Activated CD4-positive, alpha-beta memory T cell treated with anti-CD3 and anti-CD28 coated beads for 36 hours (primary cell): ENCODE measurements at regions of chr12 and their contacts with region 1.

Region 1: DNA sequence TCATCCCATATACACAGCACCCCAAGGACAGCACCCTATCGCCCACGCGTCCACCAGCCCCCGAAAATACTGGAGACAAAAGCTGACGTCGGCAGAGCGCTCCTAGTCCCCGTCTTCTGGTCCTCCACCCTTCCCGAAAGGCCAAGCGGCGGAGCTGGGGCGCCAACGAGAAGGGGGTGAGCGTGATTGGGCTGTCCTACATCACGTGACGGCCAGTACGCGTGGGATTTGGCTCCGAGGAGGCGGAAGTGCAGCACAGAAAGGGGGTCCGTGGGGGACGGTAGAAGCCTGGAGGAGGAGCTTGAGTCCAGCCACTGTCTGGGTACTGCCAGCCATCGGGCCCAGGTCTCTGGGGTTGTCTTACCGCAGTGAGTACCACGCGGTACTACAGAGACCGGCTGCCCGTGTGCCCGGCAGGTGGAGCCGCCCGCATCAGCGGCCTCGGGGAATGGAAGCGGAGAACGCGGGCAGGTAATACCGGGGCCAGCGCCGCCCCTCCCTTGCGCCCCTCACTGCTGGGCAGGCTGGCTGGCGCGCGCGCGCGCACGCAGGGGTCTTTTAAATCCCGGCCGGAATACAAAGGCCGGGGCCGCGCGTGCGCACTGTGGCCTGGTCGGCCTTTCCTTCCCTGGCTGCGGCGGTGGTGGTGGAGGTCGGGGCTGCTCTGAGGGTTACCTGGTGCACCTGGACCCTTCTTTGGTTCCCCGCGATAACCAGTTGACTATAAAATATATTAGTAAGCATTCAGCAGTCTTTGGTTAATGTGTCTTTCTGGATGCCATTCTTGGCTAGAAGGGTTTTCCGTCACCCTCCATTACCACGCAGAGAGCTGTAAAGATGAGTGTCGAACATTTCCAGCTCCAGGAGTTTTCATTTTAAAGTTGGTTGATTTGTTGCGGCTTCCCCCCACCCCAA is at the start of gene TDG:
- DNase-seq: peak; percentile 99
- H3K4me3 Mint-ChIP-seq: peak within 1 kb of the TSS; percentile 96
- H3K27ac Mint-ChIP-seq: peak within 1 kb of the TSS; percentile 96
- H3K4me1 Mint-ChIP-seq: peaks cover 53% of the 10 kb centered on the region
- H3K27me3 Mint-ChIP-seq: no peaks in the 10 kb centered on the region
- total RNA-seq, gene TDG: 29.1 to 29.7 TPM

Region 2: GRCh38 chr12:103840876-103841689 is 124.8 kb before region 1 on chr12 and contains the start of gene NT5DC3:
- CTCF ChIA-PET with region 1: no interaction called
- POLR2A ChIA-PET with region 1: no interaction called
- intact Hi-C with region 1: loop called (anchors 2 kb)
- DNase-seq: peak; percentile 89
- H3K4me3 Mint-ChIP-seq: peak within 1 kb of the TSS; percentile 76
- H3K27ac Mint-ChIP-seq: peak within 1 kb of the TSS; percentile 31
- H3K4me1 Mint-ChIP-seq: peaks cover 13% of the 10 kb centered on the region
- H3K27me3 Mint-ChIP-seq: no peaks in the 10 kb centered on the region
- total RNA-seq, gene NT5DC3: 6.8 to 7.5 TPM

Region 3: GRCh38 chr12:103947871-103948555 is 17.8 kb before region 1 on chr12:
- CTCF ChIA-PET with region 1: interaction called, 3 read pairs
- POLR2A ChIA-PET with region 1: interaction called, 10 read pairs
- intact Hi-C with region 1: no loop called
- DNase-seq: peak; percentile 30
- H3K4me3 Mint-ChIP-seq: no peak overlapping the region
- H3K27ac Mint-ChIP-seq: peak overlapping the region; percentile 68
- H3K4me1 Mint-ChIP-seq: peaks cover 45% of the 10 kb centered on the region
- H3K27me3 Mint-ChIP-seq: no peaks in the 10 kb centered on the region

Region 4: DNA sequence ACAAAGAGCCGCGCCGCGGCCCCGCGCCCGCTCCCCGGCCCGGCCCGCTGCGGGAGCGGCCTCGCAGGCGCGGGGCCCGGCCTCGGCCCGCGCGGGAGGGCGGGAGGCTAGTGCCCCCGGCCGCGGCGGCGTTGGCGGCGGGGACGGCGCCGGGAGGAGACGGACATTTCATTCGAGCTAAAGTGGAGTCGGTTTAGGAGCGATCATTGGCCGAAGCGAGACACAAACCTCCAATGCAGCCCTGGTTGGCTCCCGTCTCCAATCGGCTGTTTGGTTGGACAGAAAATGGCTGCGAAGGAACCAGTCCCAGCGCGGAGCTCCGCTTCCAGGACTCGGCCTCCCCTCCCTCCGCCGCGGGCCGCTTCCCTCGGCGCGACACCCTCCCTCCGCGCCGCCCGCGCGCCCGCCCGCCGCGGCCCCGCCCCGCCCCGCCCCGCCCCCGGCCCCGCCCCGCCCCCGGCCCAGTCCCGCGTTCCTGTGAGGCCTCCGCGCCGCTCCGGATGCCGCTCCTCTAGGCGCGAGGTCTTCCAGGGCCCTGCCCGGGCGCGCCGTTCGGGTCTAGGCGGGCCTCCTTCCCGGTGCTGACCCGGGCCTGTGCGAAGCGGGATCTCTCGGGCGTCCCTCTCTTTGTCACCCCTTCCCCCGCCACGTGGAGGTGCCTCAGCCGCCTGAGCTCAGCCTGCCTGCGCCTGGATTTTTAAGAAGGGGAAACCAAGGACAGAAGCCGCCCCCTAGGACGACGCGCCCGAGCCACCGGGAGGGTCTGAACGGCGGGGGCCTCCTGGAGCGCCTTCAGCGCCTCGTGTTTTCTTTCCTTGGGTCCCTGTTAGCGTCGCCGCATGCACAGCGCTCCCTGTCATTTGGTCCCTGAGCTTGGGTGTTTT is 172.3 kb after region 1 on chr12 and contains the start of gene NFYB:
- CTCF ChIA-PET with region 1: interaction called, 4 read pairs
- POLR2A ChIA-PET with region 1: interaction called, 11 read pairs
- intact Hi-C with region 1: loop called (anchors 5 kb)
- DNase-seq: peak; percentile 95
- H3K4me3 Mint-ChIP-seq: peak within 1 kb of the TSS; percentile 83
- H3K27ac Mint-ChIP-seq: peak within 1 kb of the TSS; percentile 84
- H3K4me1 Mint-ChIP-seq: peaks cover 13% of the 10 kb centered on the region
- H3K27me3 Mint-ChIP-seq: no peaks in the 10 kb centered on the region
- total RNA-seq, gene NFYB: 23.6 to 24.5 TPM